ENCODE measurements at regions of chr10 and their contacts with region 1.

Region 1: DNA sequence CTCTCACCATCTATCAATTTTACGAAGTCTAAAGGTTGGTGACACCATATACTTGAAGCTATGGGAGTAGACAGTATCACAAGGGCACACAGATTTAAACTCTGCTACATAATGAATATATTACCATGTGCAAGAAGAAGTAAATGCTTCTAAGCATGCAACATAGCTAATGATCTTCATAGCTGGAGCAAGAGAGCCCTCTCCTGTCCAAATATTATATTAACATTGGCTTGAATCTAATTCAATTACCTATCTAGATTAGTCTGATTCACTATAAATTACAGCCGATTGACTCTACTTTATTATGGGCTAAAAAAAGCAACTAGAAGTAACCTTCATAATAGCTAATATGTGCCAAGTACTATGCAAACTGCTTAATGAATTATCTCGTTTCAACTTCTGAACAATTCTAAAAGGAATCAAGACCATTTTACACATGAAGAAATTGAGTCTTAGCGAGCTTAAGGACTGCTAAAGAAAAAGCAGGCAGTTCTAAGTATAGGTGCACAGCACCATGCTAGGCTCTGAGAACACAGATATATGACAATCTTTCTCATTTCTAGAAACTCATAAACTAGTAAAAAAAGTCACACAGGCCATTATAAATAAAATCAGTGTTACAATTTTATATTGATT is 21.9 kb downstream of the FRA10AC1 start:
- DNase-seq: peak; percentile 11 to 62
- H3K4me3 ChIP-seq: no peak overlapping the region
- H3K4me1 ChIP-seq: peaks cover 2% of the 10 kb centered on the region; the same call in 1 of the 2 replicates
- H3K27me3 ChIP-seq: no peaks in the 10 kb centered on the region

Region 2: DNA sequence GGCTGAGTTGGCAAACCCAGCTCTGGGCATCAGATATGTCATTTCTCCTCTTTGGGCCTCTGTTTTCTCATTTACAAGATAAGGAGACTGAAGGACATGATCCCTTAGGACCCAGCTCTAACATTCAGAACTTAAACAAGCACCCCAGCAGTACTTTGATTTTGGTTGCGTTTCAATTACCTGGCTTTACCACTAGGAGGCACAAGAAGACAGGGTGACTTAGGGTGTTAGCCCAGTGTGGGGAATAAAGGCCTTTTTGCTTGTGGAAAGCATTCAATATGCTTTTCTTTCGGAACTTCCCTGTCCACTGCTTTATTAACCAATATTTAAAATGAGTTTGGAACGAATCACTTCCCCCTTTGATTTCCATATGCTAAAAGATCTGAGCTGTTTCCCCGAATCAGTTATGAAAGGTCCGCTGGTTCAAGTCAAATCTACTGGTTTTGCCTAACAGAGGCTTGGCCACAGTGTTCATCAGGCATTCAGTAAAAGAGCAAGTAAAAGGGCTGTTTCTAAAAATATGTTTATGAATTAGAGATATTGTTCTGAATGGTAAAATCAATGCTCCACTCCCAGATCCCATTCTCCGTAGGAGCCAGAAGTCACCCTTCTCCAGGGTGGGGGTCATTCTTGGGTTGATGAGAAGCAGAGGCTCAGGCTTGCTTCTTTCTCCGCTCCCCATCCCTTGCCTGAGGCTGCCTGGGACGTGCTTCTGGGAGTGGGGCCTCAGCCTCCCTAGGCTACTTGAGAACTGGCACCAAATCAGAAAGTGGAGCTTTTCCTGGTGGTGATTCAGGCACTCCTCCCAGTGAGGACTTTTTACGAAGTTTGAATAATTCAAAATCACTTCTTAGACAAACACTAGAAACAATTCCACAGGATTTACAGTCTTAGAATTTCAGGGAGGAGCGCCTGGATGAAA is 303.9 kb before region 1 on chr10:
- in situ Hi-C with region 1: loop called (anchors 25 kb)
- DNase-seq: peak; percentile 64 to 72
- H3K4me3 ChIP-seq: no peak overlapping the region
- H3K4me1 ChIP-seq: peaks cover 5% of the 10 kb centered on the region; the same call in 1 of the 2 replicates
- H3K27me3 ChIP-seq: no peaks in the 10 kb centered on the region

Region 3: GRCh38 chr10:93904901-93905300 is 224.4 kb after region 1 on chr10:
- in situ Hi-C with region 1: no loop called
- DNase-seq: no peak
- H3K4me3 ChIP-seq: no peak overlapping the region
- H3K4me1 ChIP-seq: no peaks in the 10 kb centered on the region
- H3K27me3 ChIP-seq: no peaks in the 10 kb centered on the region

Measured in HAP-1 (cell line).